AG04449 (cell line): ENCODE measurements at regions of chr20 and their contacts with region 1.

Region 1: GRCh38 chr20:63864847-63865640 is at the start of gene TPD52L2:
- DNase-seq: peak; percentile 77
- H3K4me3 ChIP-seq: peak within 1 kb of the TSS; percentile 96
- CTCF ChIP-seq: no peak

Region 2: DNA sequence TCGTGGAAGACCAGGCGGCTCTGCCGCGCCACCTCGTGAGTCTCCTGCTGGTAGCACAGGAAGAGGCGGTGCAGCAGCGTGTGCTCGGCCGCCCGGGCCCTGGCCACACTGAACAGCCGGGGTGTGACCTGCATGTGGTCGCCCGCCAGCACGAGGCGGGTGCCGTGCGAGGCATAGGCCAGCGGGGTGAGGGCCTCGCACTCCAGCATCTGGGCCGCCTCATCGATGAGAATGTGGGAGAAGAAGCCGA is 298.0 kb before region 1 on chr20:
- CTCF ChIA-PET with region 1: no interaction called
- POLR2A ChIA-PET with region 1: no interaction called
- DNase-seq: no peak
- H3K4me3 ChIP-seq: no peak overlapping the region
- CTCF ChIP-seq: no peak

Region 3: DNA sequence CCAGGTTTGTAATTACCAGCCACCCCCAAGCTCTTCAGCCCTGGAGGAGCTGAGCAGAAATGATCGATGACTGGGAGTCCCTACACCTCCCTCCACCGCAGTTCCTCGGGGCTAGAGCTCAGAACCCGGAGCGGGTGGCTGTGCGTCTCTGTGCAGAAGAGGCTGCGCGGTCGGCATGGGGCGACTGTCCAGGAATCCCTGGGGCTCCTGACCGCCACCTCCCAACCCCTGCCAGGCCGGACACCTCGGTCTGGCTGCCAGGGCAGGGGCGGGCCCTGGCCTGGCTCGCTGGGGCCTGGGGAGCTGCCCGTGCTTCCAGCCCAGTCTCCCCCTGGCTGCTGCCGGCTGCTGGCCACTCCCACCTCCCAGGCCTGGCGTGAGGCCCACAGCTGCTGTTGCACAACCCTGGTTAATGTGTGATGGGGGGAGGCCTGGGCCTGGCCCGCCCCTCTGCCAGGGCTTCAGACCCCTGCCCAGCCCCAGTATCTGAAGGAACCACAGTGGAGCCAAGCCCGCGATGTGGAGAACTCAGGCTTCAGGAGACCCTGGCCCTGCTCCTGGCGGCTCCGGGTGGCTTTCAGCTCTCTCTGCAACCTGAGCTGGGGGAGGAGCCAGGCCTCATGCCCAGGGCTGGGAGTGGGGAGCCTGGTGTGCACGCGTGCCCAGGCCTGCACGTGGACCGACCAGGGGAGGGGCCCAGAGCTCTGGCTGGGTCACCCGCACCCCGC is 124.3 kb before region 1 on chr20:
- CTCF ChIA-PET with region 1: interaction called, 16 read pairs
- POLR2A ChIA-PET with region 1: interaction called, 14 read pairs
- DNase-seq: peak; percentile 26
- H3K4me3 ChIP-seq: peak overlapping the region; percentile 75
- CTCF ChIP-seq: peak; percentile 34

Region 4: DNA sequence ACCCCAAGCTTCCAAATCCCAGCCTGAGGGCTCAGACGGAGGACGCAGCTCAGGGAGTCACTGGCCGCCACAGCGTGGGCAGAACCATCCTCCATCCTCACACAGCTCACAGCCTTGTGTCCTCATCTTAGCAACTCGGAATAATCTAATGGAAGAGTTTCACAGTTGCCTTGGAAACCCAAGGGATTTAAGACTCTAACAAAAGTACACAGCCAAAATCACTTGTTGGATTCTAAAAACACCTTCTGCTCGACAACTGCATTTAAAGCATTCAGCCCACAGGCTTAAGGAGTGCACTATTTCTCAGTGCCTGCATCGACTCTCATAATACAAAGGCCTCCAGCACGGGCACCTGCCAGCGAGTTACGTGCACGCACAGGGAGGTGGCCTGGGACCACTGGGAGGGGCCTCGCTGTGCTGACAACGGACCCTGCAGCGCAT is 79.3 kb before region 1 on chr20:
- CTCF ChIA-PET with region 1: interaction called, 47 read pairs
- POLR2A ChIA-PET with region 1: interaction called, 4 read pairs
- DNase-seq: no peak
- H3K4me3 ChIP-seq: no peak overlapping the region
- CTCF ChIP-seq: peak; percentile 1

Region 5: GRCh38 chr20:63835021-63835858 is 29.8 kb before region 1 on chr20:
- CTCF ChIA-PET with region 1: no interaction called
- POLR2A ChIA-PET with region 1: interaction called, 16 read pairs
- DNase-seq: peak; percentile 87
- H3K4me3 ChIP-seq: no peak overlapping the region
- CTCF ChIP-seq: no peak

Region 6: GRCh38 chr20:63889241-63890200 is 24.5 kb after region 1 on chr20:
- CTCF ChIA-PET with region 1: interaction called, 12 read pairs
- POLR2A ChIA-PET with region 1: interaction called, 6 read pairs
- DNase-seq: no peak
- H3K4me3 ChIP-seq: no peak overlapping the region
- CTCF ChIP-seq: no peak